ENCODE measurements at regions of chr12 and their contacts with region 1.

Region 1: GRCh38 chr12:105538880-105539279 is 208.4 kb downstream of the C12orf75 start:
- DNase-seq: no peak
- ATAC-seq: no peak

Region 2: DNA sequence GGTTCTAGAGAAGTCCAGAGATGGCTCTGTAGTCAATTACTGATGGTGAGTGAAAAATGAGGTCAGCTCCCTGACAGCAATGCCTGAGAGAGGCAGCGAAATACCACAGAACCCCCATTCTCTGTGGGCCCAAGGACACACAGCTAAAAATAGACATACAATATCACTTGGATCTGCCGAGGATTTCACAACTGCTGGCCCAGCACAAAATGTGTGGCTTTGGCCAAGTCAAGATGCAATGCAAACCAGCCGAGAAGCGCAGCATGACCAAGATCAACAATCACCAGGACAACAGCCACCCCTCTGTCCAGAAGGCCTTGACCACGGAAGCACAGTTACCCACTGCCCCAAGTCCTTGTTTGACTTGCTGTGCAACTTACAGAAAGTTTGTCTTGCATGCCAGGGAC is 656.7 kb after region 1 on chr12:
- intact Hi-C with region 1: loop called (anchors 10 kb)
- DNase-seq: peak; percentile 70
- ATAC-seq: peak; percentile 91

Measured in Right ventricle myocardium inferior (tissue), 1 donor.